Activated B cell treated with CpG ODN at 0.5 μM for 24 hours (primary cell): ENCODE measurements at regions of chr4 and their contacts with region 1.

Region 1: GRCh38 chr4:4334798-4335520 is 44.9 kb downstream of the ZBTB49 start:
- DNase-seq: peak; percentile 48
- ATAC-seq: peak; percentile 75
- H3K4me3 Mint-ChIP-seq: peak overlapping the region; percentile 32
- H3K27ac Mint-ChIP-seq: no peak overlapping the region
- H3K4me1 Mint-ChIP-seq: peaks cover 6% of the 10 kb centered on the region
- H3K27me3 Mint-ChIP-seq: peaks cover 4% of the 10 kb centered on the region
- CTCF ChIP-seq: peak; percentile 49

Region 2: DNA sequence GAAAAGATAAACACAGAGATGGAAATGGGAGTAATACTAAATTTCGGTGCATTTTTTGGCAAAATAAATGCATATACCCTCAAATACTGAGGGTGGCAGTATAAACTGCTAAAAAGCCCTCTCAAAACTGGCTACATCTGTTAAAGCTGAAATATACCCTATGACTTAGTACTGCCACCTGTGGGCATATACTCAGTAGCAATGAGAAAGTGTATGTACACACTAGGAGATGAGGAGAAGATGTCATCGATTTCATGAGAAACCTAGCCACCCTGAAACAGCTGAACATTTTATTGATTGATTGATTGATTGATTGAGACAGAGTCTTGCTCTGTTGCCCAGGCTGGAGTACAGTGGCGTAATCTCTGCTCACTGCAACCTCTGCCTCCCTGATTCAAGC is 74.7 kb before region 1 on chr4:
- CTCF ChIA-PET with region 1: interaction called, 3 read pairs
- POLR2A ChIA-PET with region 1: no interaction called
- intact Hi-C with region 1: loop called (anchors 1 kb)
- DNase-seq: no peak
- ATAC-seq: peak; percentile 77
- H3K4me3 Mint-ChIP-seq: no peak overlapping the region
- H3K27ac Mint-ChIP-seq: no peak overlapping the region
- H3K4me1 Mint-ChIP-seq: no peaks in the 10 kb centered on the region
- H3K27me3 Mint-ChIP-seq: peaks cover 3% of the 10 kb centered on the region
- CTCF ChIP-seq: no peak